ENCODE measurements at regions of chr1 and their contacts with region 1.

Region 1: DNA sequence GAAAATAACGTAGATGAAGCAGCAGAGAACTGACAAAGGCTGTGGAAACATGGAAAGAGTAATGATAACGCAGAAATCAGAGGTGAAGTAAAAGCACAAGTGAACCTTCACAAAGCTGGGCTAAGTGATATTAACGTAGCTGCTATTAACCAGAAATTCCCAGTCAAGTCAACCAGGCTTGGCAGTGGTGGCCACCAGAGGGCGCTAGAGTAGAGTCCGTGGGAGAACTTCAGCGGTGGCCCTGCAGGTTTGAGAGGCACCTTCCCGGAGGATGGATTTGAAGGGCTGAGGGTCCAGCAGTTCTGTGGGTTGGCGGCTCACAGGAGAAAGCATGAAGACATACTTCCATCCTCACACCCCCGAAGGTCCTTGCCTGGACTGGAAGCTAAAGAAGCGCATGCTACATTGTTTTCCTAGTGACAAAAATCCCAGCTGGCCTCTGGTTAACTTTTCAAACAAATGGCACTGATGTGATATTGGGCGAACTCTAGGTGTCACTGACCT is 81.7 kb upstream of the ZNF648 start:
- DNase-seq: peak; percentile 69
- H3K27ac ChIP-seq: peak overlapping the region; percentile 100
- CTCF ChIP-seq: peak; percentile 90

Region 2: GRCh38 chr1:181676269-181676668 is 466.9 kb before region 1 on chr1:
- CTCF ChIA-PET with region 1: no interaction called
- POLR2A ChIA-PET with region 1: no interaction called
- DNase-seq: peak; percentile 63
- H3K27ac ChIP-seq: no peak overlapping the region
- CTCF ChIP-seq: no peak

Region 3: GRCh38 chr1:182084487-182085316 is 58.5 kb before region 1 on chr1:
- CTCF ChIA-PET with region 1: interaction called, 40 read pairs
- POLR2A ChIA-PET with region 1: no interaction called
- DNase-seq: peak; percentile 78
- H3K27ac ChIP-seq: peak overlapping the region; percentile 39
- CTCF ChIP-seq: peak; percentile 72

Region 4: DNA sequence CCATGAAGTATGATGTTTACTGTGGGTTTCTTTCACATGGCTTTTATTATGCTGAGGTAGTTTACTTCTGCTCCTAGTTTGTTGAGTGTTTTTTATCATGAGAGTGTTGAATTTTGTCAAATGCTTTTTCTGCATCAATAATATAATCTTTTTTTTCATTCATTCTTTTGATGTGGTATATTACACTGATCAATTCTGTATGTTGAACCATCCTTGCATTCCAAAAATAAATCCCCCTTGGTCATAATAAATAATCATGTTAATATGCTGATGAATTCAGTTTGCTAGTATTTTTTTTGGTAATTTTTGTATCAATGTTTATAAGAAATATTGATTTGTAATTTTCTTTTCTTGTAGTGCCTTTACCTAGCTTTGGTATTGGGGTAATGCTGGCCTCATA is 16.2 kb after region 1 on chr1:
- CTCF ChIA-PET with region 1: no interaction called
- POLR2A ChIA-PET with region 1: no interaction called
- DNase-seq: no peak
- H3K27ac ChIP-seq: no peak overlapping the region
- CTCF ChIP-seq: no peak

Region 5: DNA sequence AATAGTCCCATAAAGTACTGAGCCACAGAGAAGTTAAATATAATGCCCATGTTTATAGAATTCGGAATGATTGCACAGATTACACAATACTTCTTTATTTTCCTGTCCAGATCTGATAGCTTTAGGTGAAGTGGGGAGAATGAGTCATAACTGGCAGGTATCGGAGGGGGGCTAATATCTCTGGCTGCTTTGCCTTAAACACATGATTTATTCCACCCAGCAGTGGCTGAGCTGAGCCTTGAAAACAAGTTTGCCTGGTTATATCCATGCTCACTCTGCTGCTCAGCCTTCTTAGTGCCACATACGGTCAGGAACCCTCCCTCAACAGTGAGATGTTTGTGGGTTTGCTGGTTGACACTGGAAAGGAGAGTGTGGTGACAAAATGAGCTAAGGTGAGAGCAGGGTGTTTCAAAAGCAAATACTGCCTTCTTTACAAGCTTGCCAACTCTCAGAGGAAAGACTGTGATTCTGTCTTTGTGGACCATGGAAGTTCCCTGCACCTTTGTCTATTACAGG is 38.0 kb after region 1 on chr1:
- CTCF ChIA-PET with region 1: interaction called, 12 read pairs
- POLR2A ChIA-PET with region 1: no interaction called
- DNase-seq: peak; percentile 83
- H3K27ac ChIP-seq: peak overlapping the region; percentile 55; the same call in 1 of the 2 replicates
- CTCF ChIP-seq: no peak

Region 6: DNA sequence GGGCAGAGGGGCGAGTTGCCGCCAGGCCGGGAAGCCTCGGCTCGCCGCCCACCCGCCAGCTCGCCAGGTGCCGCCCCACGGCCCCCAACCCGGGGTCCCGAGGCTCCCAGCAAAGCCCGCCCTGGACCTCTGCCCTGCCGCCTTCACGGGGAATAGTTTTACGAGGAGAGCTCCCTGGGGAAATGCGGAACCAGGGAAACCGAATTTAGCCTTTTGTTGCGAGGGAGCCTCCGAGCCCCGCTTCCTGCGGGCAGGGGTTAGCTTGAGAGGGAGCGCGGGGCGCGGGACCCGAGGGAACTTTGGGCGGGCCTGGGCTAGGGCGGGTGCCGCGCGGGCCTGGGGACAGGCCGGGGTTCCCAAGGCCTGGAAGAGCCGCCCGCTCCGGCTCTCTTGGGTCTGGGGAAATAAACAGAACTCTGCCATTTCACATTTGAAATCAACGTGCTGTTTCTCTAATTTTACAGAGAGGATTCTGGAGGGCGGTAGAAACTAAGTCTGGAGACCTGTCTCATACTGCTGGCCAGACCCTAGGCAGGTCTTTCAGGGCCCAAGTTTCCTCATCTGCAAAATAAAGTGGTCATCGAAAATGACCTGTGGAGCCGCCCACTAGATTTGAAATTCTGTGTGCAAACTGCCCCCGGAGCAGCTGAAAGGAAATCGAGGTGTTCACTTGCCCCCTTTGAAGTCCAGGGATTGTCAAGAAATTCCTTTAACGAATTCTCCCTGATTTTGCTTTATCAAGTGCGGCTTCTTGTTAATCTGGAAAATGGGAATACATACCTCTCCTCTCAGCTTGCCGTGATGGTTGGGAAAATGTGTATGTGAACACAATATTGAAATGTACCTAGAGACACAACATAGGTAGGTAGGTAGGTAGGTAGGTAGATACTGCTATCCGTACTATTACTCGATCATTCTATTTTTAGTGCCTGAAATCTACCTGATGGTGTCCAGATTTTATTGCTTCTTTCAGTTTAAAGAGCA is 249.1 kb after region 1 on chr1:
- CTCF ChIA-PET with region 1: interaction called, 58 read pairs
- POLR2A ChIA-PET with region 1: interaction called, 3 read pairs
- DNase-seq: peak; percentile 17
- H3K27ac ChIP-seq: peak overlapping the region; percentile 92
- CTCF ChIP-seq: no peak

Region 7: GRCh38 chr1:182397771-182398393 is 254.7 kb after region 1 on chr1:
- CTCF ChIA-PET with region 1: interaction called, 58 read pairs
- POLR2A ChIA-PET with region 1: no interaction called
- DNase-seq: peak; percentile 16
- H3K27ac ChIP-seq: no peak overlapping the region
- CTCF ChIP-seq: no peak